PC-3 (cell line): ENCODE measurements at regions of chr7 and their contacts with region 1.

Region 1: GRCh38 chr7:106346678-106347217 is 62.0 kb upstream of the NAMPT start:
- DNase-seq: peak; percentile 98
- ATAC-seq: peak; percentile 91
- H3K4me3 ChIP-seq: no peak overlapping the region
- H3K27ac ChIP-seq: peak overlapping the region; percentile 52
- H3K4me1 ChIP-seq: peaks cover 28% of the 10 kb centered on the region
- H3K27me3 ChIP-seq: no peaks in the 10 kb centered on the region
- CTCF ChIP-seq: no peak

Region 2: GRCh38 chr7:106329971-106330733 is 16.6 kb before region 1 on chr7:
- CTCF ChIA-PET with region 1: no interaction called
- POLR2A ChIA-PET with region 1: interaction called, 3 read pairs
- intact Hi-C with region 1: loop called (anchors 1 kb)
- DNase-seq: peak; percentile 74
- ATAC-seq: peak; percentile 92
- H3K4me3 ChIP-seq: no peak overlapping the region
- H3K27ac ChIP-seq: peak overlapping the region; percentile 23
- H3K4me1 ChIP-seq: peaks cover 17% of the 10 kb centered on the region
- H3K27me3 ChIP-seq: no peaks in the 10 kb centered on the region
- CTCF ChIP-seq: no peak